ENCODE measurements at regions of chr11 and their contacts with region 1.

Region 1: DNA sequence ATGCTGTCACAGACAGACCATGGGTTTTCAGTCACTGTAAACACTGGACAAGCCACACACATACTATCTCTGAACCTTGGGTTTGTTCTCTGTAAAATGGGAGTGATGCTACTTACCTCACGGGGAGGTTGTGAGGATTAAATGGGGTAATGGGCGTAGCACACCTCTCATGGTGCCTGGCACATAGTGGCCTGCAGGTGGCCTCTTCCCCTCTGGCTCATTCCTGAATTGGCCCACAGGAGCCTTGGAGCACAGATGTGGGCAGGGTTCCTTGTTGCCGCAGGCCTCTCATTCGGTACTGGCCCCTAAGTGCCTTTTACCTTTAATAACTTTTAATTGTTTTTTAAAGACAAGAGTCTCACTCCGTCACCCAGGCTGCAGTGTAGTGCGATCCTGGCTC is 11.7 kb downstream of the MICAL2 start:
- DNase-seq: no peak
- H3K4me3 ChIP-seq: no peak overlapping the region
- H3K4me3 Mint-ChIP-seq: no peak overlapping the region
- H3K27ac ChIP-seq: no peak overlapping the region
- H3K27ac Mint-ChIP-seq: peak overlapping the region in 1 of 7 donors; percentile 66
- H3K4me1 ChIP-seq: peaks cover 97 to 100% of the 10 kb centered on the region in 2 donors
- H3K4me1 Mint-ChIP-seq: peaks cover 96% of the 10 kb centered on the region
- H3K27me3 ChIP-seq: no peaks in the 10 kb centered on the region
- H3K27me3 Mint-ChIP-seq: no peaks in the 10 kb centered on the region
- CTCF ChIP-seq: peak; percentile 44

Region 2: DNA sequence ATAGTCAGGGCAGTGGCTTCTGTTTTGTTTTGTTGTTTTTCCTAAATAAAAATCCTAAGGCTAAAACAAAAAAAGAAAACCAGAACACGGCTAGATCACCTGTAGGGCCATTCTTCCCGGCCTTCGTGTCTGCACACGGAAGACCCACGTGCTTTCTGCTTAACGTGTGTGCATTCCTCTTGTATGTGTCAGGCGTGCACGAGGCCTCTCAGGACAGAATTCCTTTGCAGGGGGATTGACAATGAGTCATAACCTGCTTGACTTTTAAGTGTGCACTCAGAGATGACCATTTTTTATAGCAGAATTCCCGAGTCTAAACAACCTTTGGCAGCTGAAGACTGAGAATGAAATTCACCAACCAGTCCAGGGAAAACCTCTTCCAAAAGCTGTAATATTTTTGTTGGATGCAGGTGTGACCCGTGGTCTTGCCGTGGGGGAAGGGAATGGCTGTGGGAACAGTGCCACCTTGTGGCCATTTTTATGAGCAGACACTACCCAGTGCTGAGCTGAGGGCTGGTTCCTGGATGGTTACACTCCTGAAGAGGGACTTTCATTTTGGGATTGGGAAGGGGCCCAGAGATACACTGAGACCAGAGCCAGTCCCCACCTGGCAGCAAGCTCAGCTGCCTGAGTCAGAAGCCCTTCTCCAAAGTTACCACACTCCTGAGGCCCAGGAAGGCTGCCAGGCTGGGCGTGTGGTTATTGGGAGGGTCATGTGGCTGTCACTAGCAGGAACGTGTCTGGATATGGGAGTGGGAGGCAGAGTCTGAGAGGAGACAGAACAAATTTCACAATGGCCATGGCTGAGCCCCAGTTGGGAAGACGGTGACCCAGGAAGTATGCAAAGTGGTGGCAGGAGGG is 77.9 kb before region 1 on chr11:
- intact Hi-C with region 1: loop called in 1 of 2 experiments (anchors 10 kb)
- DNase-seq: peak; percentile 33 to 65 (median 53)
- H3K4me3 ChIP-seq: no peak overlapping the region
- H3K4me3 Mint-ChIP-seq: peak overlapping the region in 1 of 2 donors; percentile 4
- H3K27ac ChIP-seq: peak overlapping the region in 1 of 2 donors; percentile 16
- H3K27ac Mint-ChIP-seq: peak overlapping the region in 5 of 7 donors; percentile 11 to 90 (median 72)
- H3K4me1 ChIP-seq: peaks cover 36 to 44% of the 10 kb centered on the region in 2 donors
- H3K4me1 Mint-ChIP-seq: peaks cover 42% of the 10 kb centered on the region
- H3K27me3 ChIP-seq: no peaks in the 10 kb centered on the region
- H3K27me3 Mint-ChIP-seq: peaks cover 2 to 7% (median 2%) of the 10 kb centered on the region in 3 donors
- CTCF ChIP-seq: peak; percentile 90

Region 3: DNA sequence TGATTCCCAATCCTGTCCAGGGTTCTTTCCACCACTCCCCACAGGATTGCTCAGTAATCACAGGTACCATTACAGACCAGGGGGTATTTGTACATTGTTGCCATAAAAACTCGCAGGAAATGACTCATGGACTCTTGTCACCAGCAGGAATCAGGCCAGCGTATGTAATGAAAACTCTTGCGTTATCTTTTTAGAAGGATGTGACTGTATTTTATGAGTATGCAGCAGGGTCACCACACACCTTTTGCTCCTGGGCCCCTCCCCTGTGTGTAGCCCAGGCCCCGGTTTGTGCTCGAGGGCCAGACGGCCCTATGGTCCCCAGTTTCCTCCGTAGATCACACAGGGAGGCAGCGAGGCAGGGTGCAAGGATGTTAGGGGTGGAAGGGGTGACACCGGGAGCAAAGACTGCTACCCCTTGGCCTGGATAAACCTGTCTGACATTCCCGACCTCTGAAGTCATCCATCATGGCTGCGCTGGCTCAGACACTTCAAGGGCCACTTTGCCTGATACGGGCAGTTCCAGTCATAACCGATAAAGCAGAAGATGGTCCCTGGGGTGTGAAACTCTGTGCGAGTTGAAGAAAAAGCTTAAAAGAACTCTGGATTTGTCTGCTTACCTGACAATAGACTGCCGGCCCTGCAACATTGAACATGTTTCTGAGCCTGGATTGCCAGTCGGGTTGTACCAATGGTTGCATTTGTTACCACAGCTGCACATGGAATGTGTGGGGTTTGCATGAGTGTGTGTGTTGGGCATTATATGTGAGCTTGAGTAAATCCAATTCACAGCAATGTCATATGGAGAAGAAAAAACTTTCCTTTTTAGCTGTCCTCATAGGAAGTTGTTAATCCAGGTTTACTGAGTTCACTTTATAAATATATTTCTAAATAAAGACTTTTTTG is 45.3 kb after region 1 on chr11:
- intact Hi-C with region 1: loop called (anchors 5 kb)
- DNase-seq: peak; percentile 56 to 89 (median 74)
- H3K4me3 ChIP-seq: no peak overlapping the region
- H3K4me3 Mint-ChIP-seq: peak overlapping the region in 1 of 2 donors; percentile 51
- H3K27ac ChIP-seq: peak overlapping the region; percentile 18 to 58
- H3K27ac Mint-ChIP-seq: peak overlapping the region; percentile 29 to 91 (median 86)
- H3K4me1 ChIP-seq: peaks cover 24 to 33% of the 10 kb centered on the region in 2 donors
- H3K4me1 Mint-ChIP-seq: peaks cover 33% of the 10 kb centered on the region
- H3K27me3 ChIP-seq: no peaks in the 10 kb centered on the region
- H3K27me3 Mint-ChIP-seq: peaks cover 0 to 4% (median 2%) of the 10 kb centered on the region in 3 donors
- CTCF ChIP-seq: no peak

Region 4: DNA sequence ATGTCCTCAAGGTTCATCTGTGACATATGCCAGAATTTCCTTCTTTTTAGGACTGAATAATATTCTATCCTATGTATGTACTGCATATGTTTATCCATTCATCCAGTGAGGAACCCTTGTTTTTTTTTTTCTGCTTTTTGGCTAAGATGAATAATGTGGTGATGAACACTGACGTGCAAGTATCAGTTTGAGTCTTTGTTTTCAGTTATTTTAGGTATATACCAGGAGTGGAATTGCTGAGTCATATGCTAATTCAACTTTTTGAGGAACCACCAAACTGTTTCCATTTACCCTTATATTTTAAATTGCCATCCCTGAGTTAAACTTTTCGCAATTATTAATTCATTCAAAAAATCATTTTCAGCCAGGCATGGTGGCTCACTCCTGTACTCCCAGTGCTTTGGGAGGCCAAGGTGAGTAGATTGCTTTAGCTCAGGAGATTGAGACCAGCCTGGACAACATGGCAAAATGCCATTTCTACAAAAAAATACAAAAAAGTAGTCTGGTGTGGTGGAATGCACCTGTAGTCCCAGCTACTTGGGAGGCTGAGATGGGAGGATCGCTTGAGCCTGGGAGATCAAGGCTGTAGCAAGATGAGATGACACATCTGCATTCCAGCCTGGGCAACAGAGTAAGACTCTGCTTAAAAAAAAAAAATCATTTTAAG is 52.5 kb after region 1 on chr11:
- intact Hi-C with region 1: loop called (anchors 5 kb)
- DNase-seq: peak; percentile 62 to 89 (median 78)
- H3K4me3 ChIP-seq: peak overlapping the region in 1 of 3 experiments; percentile 0
- H3K4me3 Mint-ChIP-seq: peak overlapping the region in 1 of 2 donors; percentile 35
- H3K27ac ChIP-seq: peak overlapping the region; percentile 19 to 77
- H3K27ac Mint-ChIP-seq: peak overlapping the region; percentile 81 to 93 (median 89)
- H3K4me1 ChIP-seq: peaks cover 28 to 37% of the 10 kb centered on the region in 2 donors
- H3K4me1 Mint-ChIP-seq: peaks cover 51% of the 10 kb centered on the region
- H3K27me3 ChIP-seq: no peaks in the 10 kb centered on the region
- H3K27me3 Mint-ChIP-seq: no peaks in the 10 kb centered on the region
- CTCF ChIP-seq: no peak

Measured in CD14-positive monocyte (primary cell).